Activated T-helper 1 cell treated with anti-CD3 and anti-CD28 coated beads, Interleukin-12 subunit alpha, Interleukin-12 subunit beta, Interleukin-2, Interleukin-4 antibody, amounts not matched to agents 30 ng/mL and 10 ng/mL and 1 ng/mL, durations not matched to agents 14 hours and 24 hours and 36 hours (primary cell): ENCODE measurements at regions of chr3 and their contacts with region 1.

Region 1: GRCh38 chr3:111668912-111669488 is 73.9 kb upstream of the ZBED2 start:
- DNase-seq: no peak
- H3K4me3 Mint-ChIP-seq: no peak overlapping the region
- H3K27ac Mint-ChIP-seq: peak overlapping the region; percentile 63
- H3K4me1 Mint-ChIP-seq: peaks cover 85% of the 10 kb centered on the region
- H3K27me3 Mint-ChIP-seq: no peaks in the 10 kb centered on the region

Region 2: GRCh38 chr3:109806929-109807328 is 1862.1 kb before region 1 on chr3:
- intact Hi-C with region 1: loop called (anchors 1 kb)
- DNase-seq: peak; percentile 30
- H3K4me3 Mint-ChIP-seq: peak overlapping the region; percentile 35
- H3K27ac Mint-ChIP-seq: peak overlapping the region; percentile 67
- H3K4me1 Mint-ChIP-seq: peaks cover 39% of the 10 kb centered on the region
- H3K27me3 Mint-ChIP-seq: peaks cover 8% of the 10 kb centered on the region

Region 3: DNA sequence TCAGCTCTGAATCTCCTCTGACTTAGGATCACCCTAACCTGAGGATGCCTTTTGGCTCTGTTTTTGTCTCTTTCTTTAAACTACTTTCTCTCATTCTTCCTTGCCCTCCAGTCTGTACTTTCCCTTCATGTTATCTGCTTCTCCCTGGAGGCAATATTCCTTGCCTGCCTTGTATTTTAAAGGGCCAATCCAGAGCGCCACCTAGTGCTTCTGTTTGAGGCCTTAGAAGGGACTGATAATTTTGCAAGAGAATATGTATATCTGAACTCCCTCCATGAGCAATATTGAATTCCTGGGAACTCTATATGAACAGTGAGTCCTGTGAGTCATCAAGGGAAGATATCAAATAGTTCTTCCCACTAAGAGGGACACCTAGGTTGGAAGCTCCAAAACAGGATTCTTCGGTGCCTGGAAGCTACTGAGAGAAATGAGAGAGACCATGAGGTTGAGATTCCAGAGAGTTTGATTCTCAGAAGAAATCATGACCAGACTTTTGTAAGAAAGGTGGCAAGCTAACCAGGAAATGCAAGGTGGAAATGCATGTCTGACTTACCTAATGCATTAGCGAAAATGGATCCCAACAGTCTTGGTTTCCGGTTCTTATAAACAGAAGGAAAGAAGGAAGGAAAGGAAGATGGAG is 330.8 kb before region 1 on chr3:
- intact Hi-C with region 1: loop called (anchors 10 kb)
- DNase-seq: peak; percentile 12
- H3K4me3 Mint-ChIP-seq: no peak overlapping the region
- H3K27ac Mint-ChIP-seq: no peak overlapping the region
- H3K4me1 Mint-ChIP-seq: peaks cover 26% of the 10 kb centered on the region
- H3K27me3 Mint-ChIP-seq: no peaks in the 10 kb centered on the region

Region 4: GRCh38 chr3:111610189-111610588 is 58.8 kb before region 1 on chr3:
- intact Hi-C with region 1: loop called (anchors 1 kb)
- DNase-seq: peak; percentile 61
- H3K4me3 Mint-ChIP-seq: peak overlapping the region; percentile 69
- H3K27ac Mint-ChIP-seq: peak overlapping the region; percentile 98
- H3K4me1 Mint-ChIP-seq: peaks cover 98% of the 10 kb centered on the region
- H3K27me3 Mint-ChIP-seq: no peaks in the 10 kb centered on the region

Region 5: DNA sequence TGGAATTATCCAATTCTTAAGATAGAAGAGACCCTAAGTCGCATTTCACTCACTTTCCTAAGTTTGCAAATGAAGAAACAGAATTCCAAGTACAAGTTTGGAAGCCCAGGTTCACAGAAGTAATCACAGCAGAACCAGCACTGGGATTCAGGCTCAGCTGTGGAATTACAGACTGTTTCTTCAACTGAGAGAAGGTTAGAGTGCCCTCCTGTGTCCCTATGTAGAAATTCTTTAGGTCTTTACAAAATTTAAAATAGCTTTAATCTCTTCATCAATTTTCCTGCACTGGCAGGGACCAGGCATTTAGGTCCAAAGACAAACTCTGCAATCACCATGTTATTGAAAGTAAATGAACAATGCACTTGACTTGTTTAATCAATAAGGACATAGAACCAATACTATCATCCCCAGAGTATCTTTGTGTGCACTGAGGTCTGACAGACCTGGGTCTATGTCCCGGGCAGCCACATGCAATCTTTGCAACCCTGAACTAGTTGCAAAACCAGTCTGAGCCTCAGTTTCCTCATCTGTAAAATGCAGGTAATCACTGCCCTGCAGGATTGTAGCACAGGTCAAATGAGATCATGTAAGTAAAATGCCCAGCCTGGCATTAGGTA is 22.4 kb after region 1 on chr3:
- intact Hi-C with region 1: loop called (anchors 1 kb)
- DNase-seq: no peak
- H3K4me3 Mint-ChIP-seq: no peak overlapping the region
- H3K27ac Mint-ChIP-seq: no peak overlapping the region
- H3K4me1 Mint-ChIP-seq: peaks cover 73% of the 10 kb centered on the region
- H3K27me3 Mint-ChIP-seq: no peaks in the 10 kb centered on the region

Region 6: DNA sequence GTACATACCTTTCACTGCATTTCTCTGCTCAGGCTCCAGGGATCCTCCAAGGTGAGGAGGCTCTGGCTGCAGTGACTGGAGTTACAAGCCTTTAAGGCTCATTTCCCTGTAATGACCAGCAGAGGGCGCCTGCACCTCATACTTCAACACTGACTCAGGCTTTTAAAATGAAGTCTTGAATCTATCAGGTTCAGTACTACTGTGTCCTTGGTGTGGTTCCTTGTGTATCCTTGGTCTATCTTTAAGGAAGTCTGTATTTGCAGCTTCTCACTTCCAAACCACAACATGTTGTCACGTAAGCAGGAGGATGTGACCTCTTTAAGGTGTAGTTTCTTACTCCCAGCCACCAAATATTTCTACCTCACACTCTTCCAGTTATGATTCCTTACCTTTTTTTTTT is 48.6 kb after region 1 on chr3:
- intact Hi-C with region 1: loop called (anchors 1 kb)
- DNase-seq: peak; percentile 44
- H3K4me3 Mint-ChIP-seq: no peak overlapping the region
- H3K27ac Mint-ChIP-seq: peak overlapping the region; percentile 70
- H3K4me1 Mint-ChIP-seq: peaks cover 8% of the 10 kb centered on the region
- H3K27me3 Mint-ChIP-seq: no peaks in the 10 kb centered on the region

Region 7: GRCh38 chr3:111967651-111968274 is 298.8 kb after region 1 on chr3:
- intact Hi-C with region 1: loop called (anchors 1 kb)
- DNase-seq: peak; percentile 57
- H3K4me3 Mint-ChIP-seq: no peak overlapping the region
- H3K27ac Mint-ChIP-seq: no peak overlapping the region
- H3K4me1 Mint-ChIP-seq: peaks cover 29% of the 10 kb centered on the region
- H3K27me3 Mint-ChIP-seq: no peaks in the 10 kb centered on the region